ENCODE measurements at regions of chr22 and their contacts with region 1.

Region 1: DNA sequence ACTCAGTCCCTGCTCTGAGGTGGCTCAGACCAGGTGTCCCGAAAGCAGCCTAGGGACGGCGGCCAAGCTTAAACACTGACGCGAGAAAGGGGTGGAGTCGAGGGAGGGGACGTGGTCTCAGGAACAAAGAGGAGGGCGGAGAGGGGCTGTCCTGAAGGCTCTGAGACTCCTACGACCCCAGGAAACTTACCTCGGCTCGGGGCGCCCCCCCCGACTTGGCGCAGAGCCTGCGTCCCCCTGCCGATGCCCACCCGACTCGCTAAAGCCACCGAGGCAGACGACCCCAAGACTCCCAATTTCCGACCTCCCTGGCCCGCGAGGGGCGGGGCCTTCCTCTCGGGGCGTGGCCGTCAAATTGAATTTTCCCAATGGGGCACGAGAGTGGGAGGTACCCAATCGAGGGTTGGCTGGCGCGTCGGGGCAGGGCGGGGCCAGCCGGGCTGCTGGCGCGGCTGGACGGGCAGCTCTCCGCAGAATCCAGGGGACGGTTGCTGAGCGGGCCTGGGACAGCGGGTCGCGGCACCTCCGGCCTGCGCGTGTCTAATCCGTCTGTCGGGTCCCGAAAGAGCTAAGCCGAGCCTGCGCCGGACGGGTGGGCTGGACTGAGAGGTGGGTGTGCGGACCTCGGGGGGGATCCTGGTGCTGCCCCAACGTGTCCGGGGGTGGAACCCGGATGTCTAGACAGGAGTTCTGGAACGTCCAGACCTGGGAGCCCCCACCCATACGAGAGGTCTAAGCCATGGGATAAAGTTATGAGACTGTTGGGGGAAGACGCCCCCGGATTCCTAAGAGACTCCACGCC is at the start of gene SMTN:
- DNase-seq: peak; percentile 75 to 90 (median 84)
- ATAC-seq: peak; percentile 83
- H3K4me3 ChIP-seq: peak within 1 kb of the TSS; percentile 84
- H3K4me3 Mint-ChIP-seq: peak within 1 kb of the TSS; percentile 83 to 93 (median 88)
- H3K27ac ChIP-seq: peak within 1 kb of the TSS; percentile 43
- H3K27ac Mint-ChIP-seq: peak within 1 kb of the TSS in 8 of 9 donors; percentile 35 to 78 (median 68)
- H3K4me1 ChIP-seq: peaks cover 13 to 39% of the 10 kb centered on the region in 2 donors
- H3K4me1 Mint-ChIP-seq: peaks cover 26 to 43% (median 38%) of the 10 kb centered on the region in 7 donors
- H3K27me3 ChIP-seq: no peaks in the 10 kb centered on the region
- H3K27me3 Mint-ChIP-seq: no peaks in the 10 kb centered on the region
- total RNA-seq, gene SMTN: 3.1 to 14.9 (median 6.2) TPM

Region 2: GRCh38 chr22:30289134-30289979 is 791.7 kb before region 1 on chr22 and contains the start of gene CASTOR1:
- CTCF ChIA-PET with region 1: no interaction called
- POLR2A ChIA-PET with region 1: no interaction called
- intact Hi-C with region 1: loop called in 1 of 2 experiments (anchors 5 kb)
- DNase-seq: peak; percentile 78 to 97 (median 84)
- ATAC-seq: peak; percentile 89
- H3K4me3 ChIP-seq: peak within 1 kb of the TSS; percentile 80
- H3K4me3 Mint-ChIP-seq: peak within 1 kb of the TSS; percentile 87 to 93 (median 90)
- H3K27ac ChIP-seq: peak within 1 kb of the TSS; percentile 75
- H3K27ac Mint-ChIP-seq: peak within 1 kb of the TSS; percentile 85 to 96 (median 92)
- H3K4me1 ChIP-seq: peaks cover 25 to 27% of the 10 kb centered on the region in 2 donors
- H3K4me1 Mint-ChIP-seq: peaks cover 12 to 55% (median 39%) of the 10 kb centered on the region in 7 donors
- H3K27me3 ChIP-seq: no peaks in the 10 kb centered on the region
- H3K27me3 Mint-ChIP-seq: no peaks in the 10 kb centered on the region
- total RNA-seq, gene CASTOR1: 12.4 to 21.3 (median 17.9) TPM

Region 3: DNA sequence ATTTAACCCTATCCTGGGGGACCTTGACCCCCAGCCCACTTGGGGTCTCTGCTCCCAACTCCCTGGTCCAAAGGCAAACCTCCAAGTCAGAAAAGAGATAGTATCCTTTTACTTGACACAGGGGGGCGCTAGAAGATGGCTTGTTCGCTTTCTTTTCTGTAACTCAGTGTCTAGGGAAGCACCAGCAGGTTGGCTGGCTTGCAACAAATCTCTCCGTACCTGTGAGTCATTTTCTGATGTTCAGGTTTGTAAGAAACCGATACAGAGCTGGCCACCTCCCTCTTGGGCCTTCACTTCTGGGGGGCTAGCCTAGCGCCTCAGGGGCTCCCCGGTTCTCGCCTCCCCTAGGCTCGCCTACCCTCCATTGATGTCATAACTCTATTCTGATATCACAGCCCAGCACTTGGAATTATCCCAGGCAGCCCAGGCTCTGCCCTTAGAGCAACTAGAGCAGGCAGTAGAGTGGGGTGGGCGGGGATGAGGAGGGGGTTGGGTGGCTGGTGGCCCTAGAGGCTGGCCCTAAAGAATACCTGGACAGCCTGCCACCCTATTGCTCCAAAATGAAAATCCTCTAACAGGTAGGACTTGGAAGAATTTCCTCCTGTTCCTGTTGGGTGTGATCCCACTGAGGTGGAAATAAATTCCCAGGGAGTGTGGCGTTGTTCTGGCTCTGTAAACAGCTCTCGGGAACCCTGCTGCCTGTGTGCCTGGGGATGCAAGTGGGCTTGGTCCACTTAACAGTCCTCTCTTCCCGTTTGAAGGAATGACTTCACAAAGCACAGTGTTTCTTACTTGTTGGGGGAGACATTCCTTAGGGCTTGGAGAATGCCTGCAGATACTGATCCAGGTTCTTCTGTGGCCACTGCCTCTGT is 317.0 kb before region 1 on chr22:
- CTCF ChIA-PET with region 1: interaction called, 16 read pairs
- POLR2A ChIA-PET with region 1: no interaction called
- intact Hi-C with region 1: loop called in 1 of 2 experiments (anchors 1 kb)
- DNase-seq: peak in 8 of 9 donors; percentile 41 to 74 (median 66)
- ATAC-seq: peak; percentile 72
- H3K4me3 ChIP-seq: no peak overlapping the region
- H3K4me3 Mint-ChIP-seq: no peak overlapping the region
- H3K27ac ChIP-seq: no peak overlapping the region
- H3K27ac Mint-ChIP-seq: no peak overlapping the region
- H3K4me1 ChIP-seq: no peaks in the 10 kb centered on the region
- H3K4me1 Mint-ChIP-seq: peaks cover 0 to 3% (median 0%) of the 10 kb centered on the region in 7 donors
- H3K27me3 ChIP-seq: no peaks in the 10 kb centered on the region
- H3K27me3 Mint-ChIP-seq: no peaks in the 10 kb centered on the region

Region 4: GRCh38 chr22:30947816-30948454 is 133.1 kb before region 1 on chr22:
- CTCF ChIA-PET with region 1: interaction called, 59 read pairs
- POLR2A ChIA-PET with region 1: interaction called, 19 read pairs
- intact Hi-C with region 1: loop called (anchors 1 kb)
- DNase-seq: peak in 7 of 9 donors; percentile 29 to 67 (median 52)
- ATAC-seq: peak; percentile 72
- H3K4me3 ChIP-seq: no peak overlapping the region
- H3K4me3 Mint-ChIP-seq: no peak overlapping the region
- H3K27ac ChIP-seq: peak overlapping the region; percentile 4
- H3K27ac Mint-ChIP-seq: no peak overlapping the region
- H3K4me1 ChIP-seq: peaks cover 11 to 63% of the 10 kb centered on the region in 2 donors
- H3K4me1 Mint-ChIP-seq: peaks cover 52 to 72% (median 65%) of the 10 kb centered on the region in 7 donors
- H3K27me3 ChIP-seq: no peaks in the 10 kb centered on the region
- H3K27me3 Mint-ChIP-seq: no peaks in the 10 kb centered on the region

Region 5: DNA sequence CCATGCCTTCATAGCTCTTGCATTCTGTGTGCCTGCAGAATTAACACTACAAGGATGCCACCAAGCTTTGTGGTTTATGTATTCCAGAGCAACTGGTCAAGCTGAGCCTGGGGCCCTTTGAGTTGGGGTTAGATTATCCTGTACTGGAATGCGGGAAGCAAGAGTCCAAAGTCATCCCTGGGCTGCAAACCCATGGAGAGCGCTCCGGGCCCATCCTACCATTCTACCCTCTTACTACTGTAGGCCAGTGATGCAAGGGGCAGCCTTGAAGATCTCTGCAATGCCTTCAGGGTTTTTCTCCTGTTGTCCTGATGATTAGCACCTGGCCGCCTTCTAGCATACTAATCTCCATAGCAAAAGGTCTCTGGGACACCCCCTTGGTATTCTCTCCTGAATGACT is 60.7 kb before region 1 on chr22:
- CTCF ChIA-PET with region 1: no interaction called
- POLR2A ChIA-PET with region 1: no interaction called
- intact Hi-C with region 1: no loop called
- DNase-seq: no peak
- ATAC-seq: no peak
- H3K4me3 ChIP-seq: no peak overlapping the region
- H3K4me3 Mint-ChIP-seq: no peak overlapping the region
- H3K27ac ChIP-seq: no peak overlapping the region
- H3K27ac Mint-ChIP-seq: no peak overlapping the region
- H3K4me1 ChIP-seq: no peaks in the 10 kb centered on the region
- H3K4me1 Mint-ChIP-seq: no peaks in the 10 kb centered on the region
- H3K27me3 ChIP-seq: no peaks in the 10 kb centered on the region
- H3K27me3 Mint-ChIP-seq: no peaks in the 10 kb centered on the region

Region 6: GRCh38 chr22:31211862-31212730 is 131.0 kb after region 1 on chr22 and contains the start of gene LIMK2:
- CTCF ChIA-PET with region 1: no interaction called
- POLR2A ChIA-PET with region 1: no interaction called
- intact Hi-C with region 1: loop called (anchors 2 to 5 kb)
- DNase-seq: peak; percentile 90 to 99 (median 95)
- ATAC-seq: peak; percentile 100
- H3K4me3 ChIP-seq: peak within 1 kb of the TSS; percentile 83
- H3K4me3 Mint-ChIP-seq: peak within 1 kb of the TSS; percentile 86 to 91 (median 88)
- H3K27ac ChIP-seq: peak within 1 kb of the TSS; percentile 82
- H3K27ac Mint-ChIP-seq: peak within 1 kb of the TSS; percentile 82 to 96 (median 89)
- H3K4me1 ChIP-seq: peaks cover 23 to 31% of the 10 kb centered on the region in 2 donors
- H3K4me1 Mint-ChIP-seq: peaks cover 38 to 72% (median 51%) of the 10 kb centered on the region in 7 donors
- H3K27me3 ChIP-seq: no peaks in the 10 kb centered on the region
- H3K27me3 Mint-ChIP-seq: no peaks in the 10 kb centered on the region
- total RNA-seq, gene LIMK2: 18.3 to 49.9 (median 28.8) TPM

Region 7: DNA sequence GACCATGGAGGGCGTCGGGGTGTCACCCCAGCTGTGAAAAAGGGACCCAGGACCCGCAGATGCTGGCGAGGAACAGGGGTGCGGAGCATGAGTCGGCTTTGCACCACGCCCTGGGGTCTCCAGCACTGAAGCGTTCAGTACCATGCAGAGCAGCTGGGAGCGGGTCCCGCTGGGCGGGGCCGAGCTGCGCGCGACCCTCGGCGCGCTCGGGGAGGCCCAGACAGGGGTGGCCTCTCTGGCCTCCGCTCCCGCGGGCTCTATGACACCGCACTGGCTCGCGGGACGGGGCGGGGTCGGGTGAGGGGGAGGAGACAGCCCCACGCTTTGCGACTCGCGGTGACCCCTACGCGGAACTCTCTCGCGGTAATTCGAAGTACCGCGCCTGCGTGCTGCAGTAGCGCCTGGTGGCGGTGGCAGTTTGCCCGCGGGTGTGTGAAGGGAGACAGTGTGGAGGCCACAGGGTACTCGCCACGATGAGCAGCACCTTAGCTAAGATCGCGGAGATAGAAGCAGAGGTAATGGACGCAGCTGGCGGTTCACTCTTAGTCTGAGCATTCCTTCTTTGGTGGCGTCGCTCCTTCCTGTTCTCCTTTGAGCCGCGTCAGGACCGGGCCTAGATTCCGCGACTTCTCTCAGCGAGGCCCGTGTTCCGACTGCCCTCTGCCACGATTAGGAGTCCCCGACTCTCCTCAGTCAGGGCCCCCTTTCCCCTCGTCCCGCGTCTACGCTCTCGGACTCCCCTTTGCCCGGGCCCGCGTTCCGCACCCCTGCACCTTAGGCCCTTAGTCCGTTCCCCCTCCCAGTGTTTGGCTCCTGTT is 318.4 kb after region 1 on chr22 and contains the start of gene DRG1:
- CTCF ChIA-PET with region 1: no interaction called
- POLR2A ChIA-PET with region 1: no interaction called
- intact Hi-C with region 1: loop called in 1 of 2 experiments (anchors 5 kb)
- DNase-seq: peak; percentile 90 to 98 (median 93)
- ATAC-seq: peak; percentile 99
- H3K4me3 ChIP-seq: peak within 1 kb of the TSS; percentile 88
- H3K4me3 Mint-ChIP-seq: peak within 1 kb of the TSS; percentile 92 to 99 (median 96)
- H3K27ac ChIP-seq: peak within 1 kb of the TSS; percentile 91
- H3K27ac Mint-ChIP-seq: peak within 1 kb of the TSS; percentile 85 to 97 (median 94)
- H3K4me1 ChIP-seq: peaks cover 10 to 15% of the 10 kb centered on the region in 2 donors
- H3K4me1 Mint-ChIP-seq: peaks cover 5 to 35% (median 22%) of the 10 kb centered on the region in 7 donors
- H3K27me3 ChIP-seq: no peaks in the 10 kb centered on the region
- H3K27me3 Mint-ChIP-seq: no peaks in the 10 kb centered on the region
- total RNA-seq, gene DRG1: 53.3 to 109 (median 84.4) TPM

Measured in naive thymus-derived CD4-positive, alpha-beta T cell (primary cell).